IMR-90 (cell line): ENCODE measurements at regions of chr11 and their contacts with region 1.

Region 1: GRCh38 chr11:131899950-131900580 is 529.6 kb downstream of the NTM start:
- DNase-seq: no peak
- ATAC-seq: no peak
- H3K4me3 ChIP-seq: no peak overlapping the region
- H3K27ac ChIP-seq: no peak overlapping the region
- H3K4me1 ChIP-seq: peaks cover 15% of the 10 kb centered on the region
- H3K27me3 ChIP-seq: no peaks in the 10 kb centered on the region
- CTCF ChIP-seq: no peak
- POLR2A ChIP-seq: no peak
- RAD21 ChIP-seq: no peak

Region 2: GRCh38 chr11:132072044-132072857 is 172.2 kb after region 1 on chr11:
- CTCF ChIA-PET with region 1: no interaction called
- POLR2A ChIA-PET with region 1: no interaction called
- dilution Hi-C with region 1: no loop called
- in situ Hi-C with region 1: no loop called
- intact Hi-C with region 1: loop called (anchors 5 kb)
- DNase-seq: peak; percentile 99
- ATAC-seq: peak; percentile 88
- H3K4me3 ChIP-seq: no peak overlapping the region
- H3K27ac ChIP-seq: peak overlapping the region; percentile 91
- H3K4me1 ChIP-seq: peaks cover 29% of the 10 kb centered on the region
- H3K27me3 ChIP-seq: no peaks in the 10 kb centered on the region
- CTCF ChIP-seq: no peak
- POLR2A ChIP-seq: peak; percentile 23; the same call in 1 of the 2 replicates
- RAD21 ChIP-seq: no peak